Activated naive CD4-positive, alpha-beta T cell treated with anti-CD3 and anti-CD28 coated beads for 36 hours (primary cell): ENCODE measurements at regions of chr1 and their contacts with region 1.

Region 1: DNA sequence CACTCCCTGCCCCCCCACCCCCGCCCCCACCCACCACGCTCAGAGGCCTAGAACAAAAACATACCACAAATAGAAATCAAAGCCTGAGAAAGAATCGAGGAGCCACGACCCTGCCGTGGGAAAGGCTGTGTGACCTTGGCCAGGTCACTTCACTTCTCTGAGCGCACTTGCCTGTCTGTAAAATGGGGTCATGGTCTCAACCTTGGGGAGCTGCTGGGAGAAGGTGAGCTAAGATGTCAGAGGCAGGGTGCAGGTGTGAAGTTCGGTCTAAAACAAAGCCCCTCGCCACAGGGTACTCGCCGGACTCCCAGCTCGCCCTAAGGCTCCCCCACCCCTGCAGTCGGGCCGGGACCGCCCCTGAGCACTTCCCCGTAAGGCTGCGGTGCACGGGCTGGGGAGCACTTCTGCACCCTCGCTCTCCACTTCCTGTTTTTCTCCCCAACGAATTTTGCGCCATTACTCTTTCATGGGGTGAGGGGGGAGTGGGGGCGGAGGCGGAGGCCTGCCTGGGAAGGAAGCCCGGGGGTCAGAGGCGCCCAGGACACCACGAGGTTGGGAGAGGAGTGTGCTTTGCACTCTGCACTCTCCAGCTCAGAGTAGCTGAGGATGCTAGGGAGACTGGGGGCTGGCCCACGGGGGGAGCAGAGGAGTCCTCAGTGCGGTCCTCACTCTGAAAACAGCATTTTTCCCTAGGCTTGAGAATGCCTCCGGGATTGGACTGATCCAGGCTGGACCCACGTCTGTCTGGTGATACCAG is 21.9 kb upstream of the PIK3CD start:
- DNase-seq: peak; percentile 87
- H3K4me3 Mint-ChIP-seq: peak overlapping the region; percentile 85
- H3K27ac Mint-ChIP-seq: peak overlapping the region; percentile 93
- H3K4me1 Mint-ChIP-seq: peaks cover 67% of the 10 kb centered on the region
- H3K27me3 Mint-ChIP-seq: no peaks in the 10 kb centered on the region

Region 2: DNA sequence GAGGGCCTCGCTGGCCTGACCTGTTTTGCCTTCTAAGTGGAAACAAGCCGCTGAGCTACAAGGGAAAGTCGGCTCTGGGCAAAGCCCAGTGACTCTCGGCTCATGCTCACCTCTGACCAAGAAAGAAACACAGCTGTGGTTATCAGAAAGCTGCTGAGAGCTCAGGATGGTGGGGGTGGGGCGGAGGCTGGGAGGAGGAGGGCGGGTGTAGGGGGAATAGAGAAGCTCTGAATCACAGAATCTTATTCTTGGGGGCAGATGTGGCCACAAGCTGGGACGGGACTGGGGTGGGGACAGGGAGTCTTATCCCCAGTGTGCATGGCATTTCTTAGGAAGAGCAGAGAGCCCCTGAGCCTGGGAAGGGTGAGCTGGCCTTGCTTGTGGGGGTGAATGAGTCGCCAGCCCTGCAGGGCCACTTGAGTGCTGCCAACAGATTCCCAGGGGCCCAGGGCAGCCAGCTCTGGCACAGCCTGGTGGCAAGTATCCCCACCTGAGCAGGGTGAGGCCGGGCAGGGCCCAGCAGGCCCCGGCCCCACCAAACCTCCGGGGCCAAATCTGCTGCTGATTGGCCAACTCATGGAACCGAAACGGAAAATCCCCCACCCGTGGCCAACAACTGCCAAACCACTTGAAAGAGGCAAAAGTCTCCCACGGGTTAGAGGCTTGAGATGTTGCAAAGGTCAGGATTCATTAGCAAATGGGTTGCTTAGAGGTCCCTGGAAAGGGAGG is 216.3 kb before region 1 on chr1:
- CTCF ChIA-PET with region 1: no interaction called
- intact Hi-C with region 1: no loop called
- DNase-seq: peak; percentile 89
- H3K4me3 Mint-ChIP-seq: no peak overlapping the region
- H3K27ac Mint-ChIP-seq: no peak overlapping the region
- H3K4me1 Mint-ChIP-seq: peaks cover 46% of the 10 kb centered on the region
- H3K27me3 Mint-ChIP-seq: no peaks in the 10 kb centered on the region

Region 3: DNA sequence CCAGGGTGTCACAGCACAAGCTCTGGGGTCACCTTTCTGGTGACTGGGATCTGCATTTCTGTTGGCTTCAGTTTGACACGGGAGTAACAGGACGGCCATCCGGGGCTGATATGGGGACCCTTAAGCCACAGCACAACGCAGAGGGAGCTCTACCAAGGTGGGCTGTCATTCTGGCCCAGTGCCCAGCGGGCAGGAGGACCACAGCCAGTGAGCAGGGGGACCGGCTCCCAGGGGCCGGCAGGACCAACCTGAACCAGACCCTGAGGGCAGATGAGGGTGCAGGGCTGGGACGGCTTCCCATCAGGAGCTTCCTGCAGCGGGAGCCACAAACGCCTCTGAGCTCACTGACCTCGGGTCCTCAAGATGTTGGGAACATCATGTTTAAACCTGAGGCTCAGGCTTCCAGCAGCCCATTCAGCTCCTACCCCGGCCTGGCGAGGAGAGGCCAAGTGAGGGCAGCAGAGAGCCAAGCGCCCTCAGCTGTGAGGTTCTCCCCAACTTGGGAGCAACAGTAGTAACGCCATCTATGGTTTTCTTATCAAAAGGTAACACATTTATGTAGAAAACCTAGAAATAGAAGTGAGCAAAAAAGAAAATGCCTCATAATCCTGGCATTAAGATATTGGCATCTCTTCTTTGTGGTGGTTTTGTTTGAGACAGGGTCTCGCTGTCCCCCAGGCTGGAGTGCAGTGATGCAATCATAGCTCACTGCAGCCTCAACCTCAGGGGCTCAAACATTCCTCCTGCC is 14.1 kb before region 1 on chr1:
- CTCF ChIA-PET with region 1: interaction called, 10 read pairs
- intact Hi-C with region 1: no loop called
- DNase-seq: peak; percentile 70
- H3K4me3 Mint-ChIP-seq: no peak overlapping the region
- H3K27ac Mint-ChIP-seq: no peak overlapping the region
- H3K4me1 Mint-ChIP-seq: no peaks in the 10 kb centered on the region
- H3K27me3 Mint-ChIP-seq: peaks cover 2% of the 10 kb centered on the region

Region 4: GRCh38 chr1:9671377-9672140 is 41.9 kb after region 1 on chr1:
- CTCF ChIA-PET with region 1: interaction called, 10 read pairs
- intact Hi-C with region 1: loop called (anchors 1 kb)
- DNase-seq: peak; percentile 59
- H3K4me3 Mint-ChIP-seq: peak overlapping the region; percentile 24
- H3K27ac Mint-ChIP-seq: peak overlapping the region; percentile 86
- H3K4me1 Mint-ChIP-seq: peaks cover 77% of the 10 kb centered on the region
- H3K27me3 Mint-ChIP-seq: no peaks in the 10 kb centered on the region

Region 5: DNA sequence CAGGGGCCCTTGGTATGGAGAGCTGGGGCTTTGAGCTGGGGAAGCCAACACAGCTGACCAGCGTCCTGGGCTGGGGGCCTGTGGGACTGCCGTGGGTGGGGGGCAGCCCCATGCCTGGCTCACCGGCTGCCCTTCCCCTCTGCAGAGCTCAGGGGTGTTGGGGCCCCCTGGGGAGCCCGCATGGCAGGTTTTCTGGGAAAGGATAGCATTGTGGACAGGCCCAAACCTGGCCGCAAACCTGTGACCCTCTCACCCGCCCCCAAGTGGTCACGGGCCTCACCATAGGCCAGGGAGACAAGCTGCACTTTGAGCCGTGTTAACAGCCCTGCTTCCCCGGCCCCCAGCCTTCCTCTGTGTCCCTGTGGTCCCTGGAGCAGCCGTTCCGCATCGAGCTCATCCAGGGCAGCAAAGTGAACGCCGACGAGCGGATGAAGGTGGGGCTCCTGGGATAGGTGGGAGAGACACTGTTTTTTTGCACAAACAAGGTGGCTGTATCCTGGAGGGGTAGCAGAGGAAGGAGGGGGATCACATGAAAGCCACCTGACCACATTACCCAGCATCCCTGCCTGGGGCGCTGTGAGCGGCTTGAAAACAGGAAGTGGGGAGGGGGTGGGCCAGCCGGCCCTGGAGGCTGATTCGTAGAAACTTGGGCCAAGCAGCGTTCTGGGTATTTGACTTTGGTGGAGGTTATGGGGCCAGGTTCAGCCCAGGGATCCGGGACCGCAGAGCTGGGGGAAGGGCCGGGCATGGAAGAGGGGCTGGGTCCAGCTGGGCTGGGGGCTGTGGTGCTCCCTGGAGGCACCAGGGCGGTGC is 87.8 kb after region 1 on chr1:
- CTCF ChIA-PET with region 1: interaction called, 134 read pairs
- intact Hi-C with region 1: loop called (anchors 1 kb)
- DNase-seq: peak; percentile 95
- H3K4me3 Mint-ChIP-seq: peak overlapping the region; percentile 90
- H3K27ac Mint-ChIP-seq: peak overlapping the region; percentile 90
- H3K4me1 Mint-ChIP-seq: peaks cover 70% of the 10 kb centered on the region
- H3K27me3 Mint-ChIP-seq: no peaks in the 10 kb centered on the region

Region 6: GRCh38 chr1:9867408-9868243 is 238.0 kb after region 1 on chr1:
- CTCF ChIA-PET with region 1: interaction called, 20 read pairs
- intact Hi-C with region 1: loop called (anchors 1 kb)
- DNase-seq: peak; percentile 95
- H3K4me3 Mint-ChIP-seq: no peak overlapping the region
- H3K27ac Mint-ChIP-seq: no peak overlapping the region
- H3K4me1 Mint-ChIP-seq: no peaks in the 10 kb centered on the region
- H3K27me3 Mint-ChIP-seq: no peaks in the 10 kb centered on the region